Thyroid gland (tissue), 4 donors: ENCODE measurements at regions of chr17 and their contacts with region 1.

Region 1: GRCh38 chr17:76278952-76279741 is 14.0 kb downstream of the UBALD2 start:
- DNase-seq: peak; percentile 98
- H3K4me3 ChIP-seq: no peak overlapping the region
- H3K27ac ChIP-seq: peak overlapping the region; percentile 39 to 64 (median 61)
- H3K4me1 ChIP-seq: peaks cover 7 to 27% of the 10 kb centered on the region in 2 donors
- H3K27me3 ChIP-seq: no peaks in the 10 kb centered on the region
- CTCF ChIP-seq: peak; percentile 97 to 99 (median 98)
- POLR2A ChIP-seq: peak in 1 of 2 donors; percentile 18

Region 2: DNA sequence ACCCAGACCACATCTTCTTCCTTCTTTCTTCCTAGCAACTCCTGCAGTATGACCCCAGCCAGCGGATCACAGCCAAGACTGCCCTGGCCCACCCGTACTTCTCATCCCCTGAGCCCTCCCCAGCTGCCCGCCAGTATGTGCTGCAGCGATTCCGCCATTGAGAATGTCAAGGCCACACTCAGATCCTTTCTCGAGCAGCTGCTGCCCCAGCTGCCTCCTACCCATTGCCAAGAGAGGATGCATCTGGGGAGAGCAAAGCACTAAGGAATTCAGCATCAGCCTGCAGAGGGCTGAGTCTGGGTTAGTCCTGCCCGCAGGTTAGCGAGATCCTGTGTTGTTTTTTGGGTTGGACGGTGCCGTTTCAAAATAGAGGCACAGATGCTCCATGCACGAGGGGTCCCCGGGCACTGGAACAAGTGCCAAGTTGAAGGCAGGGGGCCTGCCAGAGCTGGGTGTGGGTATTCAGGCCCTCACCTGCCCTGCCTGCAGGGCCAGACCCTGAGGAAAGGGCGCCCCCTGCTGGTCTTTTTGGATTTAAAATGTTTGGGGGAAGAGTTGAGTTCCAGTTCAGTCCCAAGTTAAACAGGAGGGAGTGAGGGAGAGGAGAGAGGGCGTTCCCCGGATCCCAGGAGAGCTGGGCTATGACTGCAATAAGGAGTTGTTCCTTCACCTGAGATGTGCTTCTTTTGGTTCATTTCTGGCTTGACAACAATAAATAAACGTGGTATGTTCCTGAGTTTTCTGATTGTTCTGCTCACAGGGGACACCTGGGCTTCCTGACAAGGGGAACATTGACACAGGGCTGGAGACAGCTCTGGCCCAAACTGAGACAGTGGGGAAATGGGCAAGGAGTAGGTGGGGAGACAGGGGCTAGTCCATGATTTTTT is 273.6 kb before region 1 on chr17:
- intact Hi-C with region 1: loop called (anchors 10 kb)
- DNase-seq: peak; percentile 60 to 73
- H3K4me3 ChIP-seq: no peak overlapping the region
- H3K27ac ChIP-seq: no peak overlapping the region
- H3K4me1 ChIP-seq: no peaks in the 10 kb centered on the region
- H3K27me3 ChIP-seq: no peaks in the 10 kb centered on the region
- CTCF ChIP-seq: peak; percentile 46 to 63 (median 56)
- POLR2A ChIP-seq: no peak

Region 3: DNA sequence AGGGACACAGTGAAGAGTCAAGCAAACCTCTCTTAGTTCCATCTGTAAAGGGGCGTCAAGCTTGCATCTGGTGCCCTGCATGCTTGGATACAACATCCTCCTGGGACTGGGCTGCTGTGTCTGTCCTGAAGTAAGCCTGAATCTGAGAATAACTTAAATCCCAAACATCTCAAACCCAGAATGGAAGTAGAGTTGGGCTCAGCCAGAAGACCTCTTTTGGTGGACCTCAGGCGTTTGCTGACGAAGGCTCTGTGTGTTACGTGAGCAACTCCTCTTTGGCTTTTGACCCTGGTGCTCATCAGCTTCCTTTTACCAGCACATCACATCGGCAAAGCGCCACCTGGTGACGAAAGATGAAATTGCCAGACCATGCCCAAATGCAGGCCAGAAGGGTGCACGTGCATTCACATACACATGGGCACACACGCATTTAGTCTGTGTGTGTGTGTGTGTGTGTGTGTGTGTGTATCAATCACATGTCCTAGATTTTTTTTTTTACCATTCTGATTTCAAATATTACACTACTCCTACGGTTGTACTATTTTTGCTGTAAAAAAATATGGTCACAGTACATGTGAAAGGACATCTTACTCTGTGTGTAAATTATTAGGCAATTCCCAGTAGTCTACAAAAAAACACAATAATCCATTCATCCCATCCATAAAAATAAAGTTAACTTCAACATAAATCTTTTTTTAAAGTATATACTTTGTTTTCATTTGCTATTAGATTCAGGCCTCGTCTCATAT is 97.0 kb before region 1 on chr17:
- intact Hi-C with region 1: loop called (anchors 5 kb)
- DNase-seq: peak; percentile 89 to 91
- H3K4me3 ChIP-seq: no peak overlapping the region
- H3K27ac ChIP-seq: no peak overlapping the region
- H3K4me1 ChIP-seq: no peaks in the 10 kb centered on the region
- H3K27me3 ChIP-seq: no peaks in the 10 kb centered on the region
- CTCF ChIP-seq: peak; percentile 51 to 90 (median 80)
- POLR2A ChIP-seq: no peak

Region 4: DNA sequence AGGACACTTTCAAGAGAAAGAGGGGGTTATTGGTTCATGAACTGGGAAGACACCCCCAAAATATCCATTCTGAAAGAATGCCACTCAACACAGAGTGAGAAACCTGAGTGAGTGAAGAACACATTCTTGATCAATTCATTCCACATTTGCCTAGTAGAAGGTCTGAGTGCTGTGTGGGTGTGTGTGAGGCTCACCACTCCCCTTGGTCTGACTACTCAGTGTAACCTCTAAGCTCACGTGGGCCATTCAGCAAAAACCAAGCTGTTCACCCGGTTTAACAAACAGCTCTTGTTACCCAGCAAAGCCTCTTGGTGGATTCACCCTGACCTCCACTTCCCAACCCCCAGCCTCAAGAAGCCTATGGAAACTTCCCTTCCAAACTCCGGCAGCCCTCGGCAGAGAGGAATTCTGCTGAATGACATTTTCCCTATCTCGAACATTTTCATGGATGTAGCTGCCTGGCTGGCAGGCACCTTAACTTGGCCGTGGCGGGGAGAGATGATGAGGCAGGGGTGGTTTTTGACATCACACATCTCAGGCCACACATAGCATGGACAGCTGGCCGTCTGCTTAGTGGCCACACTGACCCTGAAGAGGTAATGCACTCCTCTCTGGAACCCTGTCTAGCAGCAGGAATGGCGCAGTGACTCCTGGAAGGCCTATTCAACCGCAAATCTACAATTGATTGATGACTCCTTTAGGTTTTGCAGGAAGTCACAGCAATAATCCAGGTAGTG is 352.9 kb after region 1 on chr17:
- intact Hi-C with region 1: no loop called
- DNase-seq: peak; percentile 67 to 86
- H3K4me3 ChIP-seq: no peak overlapping the region
- H3K27ac ChIP-seq: peak overlapping the region in 1 of 3 donors; percentile 45
- H3K4me1 ChIP-seq: peaks cover 0 to 11% of the 10 kb centered on the region in 2 donors
- H3K27me3 ChIP-seq: no peaks in the 10 kb centered on the region
- CTCF ChIP-seq: no peak
- POLR2A ChIP-seq: no peak